Sigmoid colon (tissue), 7 donors: ENCODE measurements at regions of chr1 and their contacts with region 1.

Region 1: GRCh38 chr1:7646981-7647901 is 123.9 kb upstream of the VAMP3 start:
- DNase-seq: peak; percentile 84
- H3K4me3 ChIP-seq: no peak overlapping the region
- H3K27ac ChIP-seq: no peak overlapping the region
- H3K4me1 ChIP-seq: peaks cover 0 to 15% (median 7%) of the 10 kb centered on the region in 4 donors
- H3K27me3 ChIP-seq: peaks cover 0 to 4% (median 0%) of the 10 kb centered on the region in 3 donors
- CTCF ChIP-seq: peak; percentile 75 to 94 (median 85)
- EP300 ChIP-seq: no peak
- POLR2A ChIP-seq: no peak

Region 2: DNA sequence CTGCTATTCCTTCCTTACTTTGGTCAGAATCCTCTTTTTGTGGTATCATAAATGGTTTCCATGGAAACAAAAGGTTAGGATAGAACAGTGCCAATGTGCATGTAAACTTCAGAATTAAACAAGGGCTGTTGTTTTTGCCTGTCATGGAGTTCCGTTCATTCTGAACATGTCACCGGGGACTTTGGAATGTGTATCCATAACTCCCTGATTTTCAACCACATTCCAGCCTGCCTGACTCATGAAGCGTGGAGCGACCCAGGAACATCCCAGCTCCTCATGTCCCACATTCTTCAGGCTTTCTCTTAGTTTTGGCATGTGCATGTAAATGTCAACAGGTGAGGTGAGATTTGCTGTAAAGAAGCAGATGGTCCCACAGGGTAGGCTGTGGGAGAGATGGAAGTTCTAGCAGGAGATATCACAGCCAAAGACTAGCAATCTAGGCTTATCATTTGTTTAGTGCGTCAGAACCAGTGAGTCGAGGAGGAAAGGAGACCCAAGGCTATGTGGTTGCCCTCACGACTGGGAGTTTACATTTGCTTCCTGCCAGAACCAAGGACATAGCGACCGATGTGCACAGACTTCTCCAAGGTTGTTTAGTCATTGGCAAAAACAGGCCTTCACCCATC is 922.6 kb before region 1 on chr1:
- intact Hi-C with region 1: loop called (anchors 5 kb)
- DNase-seq: no peak
- H3K4me3 ChIP-seq: no peak overlapping the region
- H3K27ac ChIP-seq: peak overlapping the region in 1 of 4 donors; percentile 52
- H3K4me1 ChIP-seq: peaks cover 0 to 14% (median 7%) of the 10 kb centered on the region in 4 donors
- H3K27me3 ChIP-seq: no peaks in the 10 kb centered on the region
- CTCF ChIP-seq: no peak
- EP300 ChIP-seq: no peak
- POLR2A ChIP-seq: no peak

Region 3: DNA sequence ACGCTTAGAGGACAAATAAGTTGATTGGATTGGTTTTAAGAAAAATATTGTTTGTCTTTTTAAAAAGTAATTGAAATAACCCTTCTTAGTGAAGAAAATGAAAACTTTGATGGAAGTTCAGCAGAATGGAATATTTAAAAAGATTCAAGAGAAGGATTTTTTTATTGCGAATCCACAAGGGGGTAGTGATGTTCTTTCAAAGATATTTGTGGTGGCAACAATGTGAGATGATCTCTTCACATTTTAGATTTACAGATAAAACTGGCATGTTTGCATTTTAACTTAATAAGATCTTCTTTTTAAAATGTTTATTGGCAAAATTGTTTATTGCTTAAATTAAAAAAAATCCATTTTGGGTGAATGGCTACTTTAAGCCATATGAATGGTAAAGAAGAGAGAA is 853.1 kb before region 1 on chr1:
- intact Hi-C with region 1: loop called (anchors 5 kb)
- DNase-seq: no peak
- H3K4me3 ChIP-seq: no peak overlapping the region
- H3K27ac ChIP-seq: no peak overlapping the region
- H3K4me1 ChIP-seq: peaks cover 0 to 29% (median 19%) of the 10 kb centered on the region in 4 donors
- H3K27me3 ChIP-seq: no peaks in the 10 kb centered on the region
- CTCF ChIP-seq: peak in 3 of 4 experiments; percentile 18 to 47 (median 43)
- EP300 ChIP-seq: no peak
- POLR2A ChIP-seq: no peak

Region 4: DNA sequence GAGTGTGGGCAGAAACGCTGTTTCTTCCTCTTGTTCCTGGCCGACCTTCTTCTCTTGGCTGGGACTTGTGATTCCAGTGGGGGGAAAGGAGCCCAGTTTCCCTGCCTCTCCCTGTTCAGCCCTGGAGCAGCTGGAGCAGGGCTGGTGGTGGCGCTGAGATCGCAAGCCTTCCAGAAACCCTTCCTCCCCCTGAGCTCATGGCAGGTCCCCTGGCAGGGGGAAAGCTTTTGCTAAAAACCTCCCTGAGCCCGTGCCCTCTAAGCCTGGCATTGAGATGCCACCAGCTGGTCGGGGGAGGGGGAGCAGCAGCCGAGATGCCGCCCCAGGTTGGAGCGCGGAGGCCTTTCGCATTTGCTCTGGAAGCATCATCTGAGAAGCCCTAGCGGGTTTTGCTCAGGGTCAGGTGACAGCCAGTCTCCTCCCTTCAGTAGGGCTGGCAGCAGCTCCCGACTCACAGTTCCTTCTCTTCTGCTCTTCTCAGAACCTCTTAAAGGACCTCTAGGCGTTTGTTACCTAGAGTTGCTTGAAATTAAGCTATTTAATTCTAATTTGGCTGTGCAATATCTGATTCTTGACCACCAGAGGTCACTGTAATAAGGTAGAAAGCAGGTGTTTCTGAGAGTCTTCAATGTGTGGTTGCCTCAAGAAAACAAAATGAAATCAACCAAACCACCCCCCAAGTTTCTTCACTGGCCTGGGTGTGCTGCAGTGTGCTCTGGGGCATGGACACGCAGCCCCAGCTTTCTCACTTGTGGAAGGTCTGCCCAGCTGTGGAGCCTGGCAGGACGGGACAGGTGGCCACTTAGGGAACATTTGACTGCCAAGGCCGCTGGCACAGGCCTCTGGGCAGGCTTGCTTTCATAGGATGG is 604.7 kb before region 1 on chr1:
- intact Hi-C with region 1: loop called (anchors 1 kb)
- DNase-seq: no peak
- H3K4me3 ChIP-seq: no peak overlapping the region
- H3K27ac ChIP-seq: no peak overlapping the region
- H3K4me1 ChIP-seq: no peaks in the 10 kb centered on the region
- H3K27me3 ChIP-seq: peaks cover 0 to 37% (median 4%) of the 10 kb centered on the region in 3 donors
- CTCF ChIP-seq: peak in 3 of 4 experiments; percentile 23 to 48 (median 45)
- EP300 ChIP-seq: no peak
- POLR2A ChIP-seq: no peak

Region 5: DNA sequence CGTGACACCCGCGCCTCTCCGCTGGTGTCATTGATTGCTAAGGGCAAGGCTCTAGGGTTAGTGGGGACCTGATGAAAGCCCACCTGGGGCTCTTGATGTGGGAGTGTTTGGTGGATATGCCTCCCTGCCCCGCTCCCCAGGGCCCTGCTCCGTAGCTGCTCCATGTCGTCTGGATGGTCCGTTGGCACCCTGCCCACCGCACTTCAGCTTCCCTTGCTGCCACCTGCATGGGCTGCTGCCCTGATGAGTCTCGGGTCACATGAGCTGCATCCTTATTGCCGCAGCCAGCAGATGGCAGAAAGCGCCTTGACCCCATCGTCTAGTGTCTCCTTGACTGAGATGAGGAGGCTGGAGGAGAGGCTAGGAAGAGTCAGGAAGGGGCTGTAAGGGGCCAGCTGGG is 422.6 kb before region 1 on chr1:
- intact Hi-C with region 1: loop called (anchors 5 kb)
- DNase-seq: no peak
- H3K4me3 ChIP-seq: no peak overlapping the region
- H3K27ac ChIP-seq: no peak overlapping the region
- H3K4me1 ChIP-seq: peaks cover 0 to 13% (median 8%) of the 10 kb centered on the region in 4 donors
- H3K27me3 ChIP-seq: no peaks in the 10 kb centered on the region
- CTCF ChIP-seq: no peak
- EP300 ChIP-seq: no peak
- POLR2A ChIP-seq: no peak